ENCODE measurements at regions of chr5 and their contacts with region 1.

Region 1: DNA sequence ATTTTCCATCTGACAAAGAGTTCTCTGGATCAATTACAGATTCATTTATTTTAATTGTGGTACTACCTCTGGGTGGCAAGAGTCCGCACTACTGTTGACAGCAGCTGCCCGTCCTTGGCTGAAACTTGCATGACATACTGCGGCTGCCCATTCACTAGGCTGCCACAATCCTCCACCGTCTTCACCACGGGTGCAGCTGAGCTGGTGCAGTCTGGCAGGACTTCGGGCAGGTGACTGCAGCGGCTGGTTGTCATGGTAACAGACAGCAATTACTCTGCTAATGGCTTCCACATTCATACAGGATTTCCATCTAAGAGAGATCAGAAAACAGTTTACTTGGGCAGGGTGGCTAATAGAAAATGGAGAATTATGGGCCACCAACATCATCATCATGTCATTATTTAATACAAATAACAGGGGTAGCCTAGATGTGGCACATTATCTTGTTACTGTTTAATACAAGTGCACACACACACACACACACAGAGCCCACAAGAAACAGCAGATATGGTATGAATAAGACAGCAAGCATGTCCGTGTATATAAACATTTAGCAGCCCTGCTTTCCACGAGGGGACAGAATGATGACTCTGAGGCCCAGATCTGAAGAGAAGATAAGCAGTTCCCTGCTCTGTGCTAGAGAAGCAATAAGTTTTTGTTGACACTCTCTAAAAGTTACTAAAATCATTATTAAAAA is 112.3 kb downstream of the MARCHF3 start:
- DNase-seq: peak; percentile 74
- ATAC-seq: peak; percentile 89
- H3K4me3 ChIP-seq: no peak overlapping the region
- H3K27ac ChIP-seq: no peak overlapping the region
- H3K4me1 ChIP-seq: peaks cover 2% of the 10 kb centered on the region
- H3K27me3 ChIP-seq: no peaks in the 10 kb centered on the region
- CTCF ChIP-seq: no peak
- POLR2A ChIP-seq: no peak
- RAD21 ChIP-seq: no peak

Region 2: GRCh38 chr5:126656396-126657007 is 261.6 kb before region 1 on chr5:
- CTCF ChIA-PET with region 1: no interaction called
- POLR2A ChIA-PET with region 1: no interaction called
- dilution Hi-C with region 1: no loop called
- in situ Hi-C with region 1: no loop called
- intact Hi-C with region 1: no loop called
- DNase-seq: peak; percentile 57
- ATAC-seq: peak; percentile 44; the same call in 1 of the 2 replicates
- H3K4me3 ChIP-seq: no peak overlapping the region
- H3K27ac ChIP-seq: no peak overlapping the region
- H3K4me1 ChIP-seq: no peaks in the 10 kb centered on the region
- H3K27me3 ChIP-seq: no peaks in the 10 kb centered on the region
- CTCF ChIP-seq: peak; percentile 94
- POLR2A ChIP-seq: no peak
- RAD21 ChIP-seq: peak; percentile 84

Region 3: GRCh38 chr5:126972062-126972895 is 54.2 kb after region 1 on chr5:
- CTCF ChIA-PET with region 1: interaction called, 10 read pairs
- POLR2A ChIA-PET with region 1: no interaction called
- dilution Hi-C with region 1: no loop called
- in situ Hi-C with region 1: no loop called
- intact Hi-C with region 1: no loop called
- DNase-seq: no peak
- ATAC-seq: no peak
- H3K4me3 ChIP-seq: no peak overlapping the region
- H3K27ac ChIP-seq: no peak overlapping the region
- H3K4me1 ChIP-seq: peaks cover 9% of the 10 kb centered on the region
- H3K27me3 ChIP-seq: no peaks in the 10 kb centered on the region
- CTCF ChIP-seq: no peak
- POLR2A ChIP-seq: no peak
- RAD21 ChIP-seq: no peak

Region 4: GRCh38 chr5:127001621-127002296 is 83.7 kb after region 1 on chr5:
- CTCF ChIA-PET with region 1: no interaction called
- POLR2A ChIA-PET with region 1: no interaction called
- dilution Hi-C with region 1: no loop called
- in situ Hi-C with region 1: no loop called
- intact Hi-C with region 1: no loop called
- DNase-seq: peak; percentile 98
- ATAC-seq: peak; percentile 92
- H3K4me3 ChIP-seq: no peak overlapping the region
- H3K27ac ChIP-seq: peak overlapping the region; percentile 52
- H3K4me1 ChIP-seq: peaks cover 14% of the 10 kb centered on the region
- H3K27me3 ChIP-seq: no peaks in the 10 kb centered on the region
- CTCF ChIP-seq: no peak
- POLR2A ChIP-seq: no peak
- RAD21 ChIP-seq: no peak